ENCODE measurements at regions of chr21 and their contacts with region 1.

Region 1: DNA sequence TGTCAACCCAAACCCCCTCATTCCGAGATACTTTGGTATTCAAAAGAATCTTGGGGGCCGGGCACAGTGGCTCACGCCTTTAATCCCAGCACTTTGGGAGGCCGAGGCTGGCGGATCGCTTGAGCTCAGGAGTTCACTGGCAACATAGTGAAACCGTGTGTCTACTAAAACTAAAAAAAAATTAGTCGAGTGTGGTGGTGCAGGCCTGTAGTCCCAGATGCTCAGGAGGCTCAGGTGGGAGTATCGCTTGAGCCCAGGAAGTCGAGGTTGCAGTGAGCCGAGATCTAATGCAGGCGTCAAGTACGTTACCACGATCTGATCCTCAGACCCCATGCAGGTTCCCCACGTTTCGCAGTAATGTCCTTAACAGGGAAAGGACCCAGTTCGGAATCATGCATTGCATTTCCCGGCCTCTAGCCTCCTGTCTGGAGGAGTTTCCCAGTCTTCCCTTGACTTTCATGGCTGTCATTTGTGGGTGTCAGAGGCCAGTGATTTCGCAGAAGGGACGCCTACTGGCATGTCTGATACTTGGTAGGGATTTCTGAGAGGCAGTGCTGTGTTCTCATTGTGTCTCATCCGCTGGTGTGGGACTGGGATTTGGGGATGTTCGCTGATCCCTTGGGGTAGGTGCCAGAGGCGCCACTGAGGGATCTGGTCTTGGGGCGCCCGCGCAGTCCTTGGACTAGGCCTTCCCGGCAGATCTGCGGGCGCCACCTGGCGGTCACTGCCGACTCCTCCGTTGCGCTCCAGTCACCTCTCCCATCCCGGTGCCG is 39.3 kb upstream of the HMGN1 start:
- DNase-seq: peak; percentile 84
- H3K4me3 ChIP-seq: peak overlapping the region; percentile 68
- H3K27ac ChIP-seq: peak overlapping the region; percentile 64
- H3K4me1 ChIP-seq: peaks cover 22% of the 10 kb centered on the region
- CTCF ChIP-seq: peak; percentile 94

Region 2: GRCh38 chr21:39183237-39184007 is 204.8 kb before region 1 on chr21 and contains the start of gene PSMG1:
- CTCF ChIA-PET with region 1: no interaction called
- POLR2A ChIA-PET with region 1: interaction called, 3 read pairs
- intact Hi-C with region 1: loop called (anchors 2 kb)
- DNase-seq: peak; percentile 95
- H3K4me3 ChIP-seq: peak within 1 kb of the TSS; percentile 96
- H3K27ac ChIP-seq: peak within 1 kb of the TSS; percentile 62
- H3K4me1 ChIP-seq: peaks cover 35% of the 10 kb centered on the region
- CTCF ChIP-seq: no peak
- total RNA-seq, gene PSMG1: 76.9 and 87.2 TPM in 2 replicates

Region 3: DNA sequence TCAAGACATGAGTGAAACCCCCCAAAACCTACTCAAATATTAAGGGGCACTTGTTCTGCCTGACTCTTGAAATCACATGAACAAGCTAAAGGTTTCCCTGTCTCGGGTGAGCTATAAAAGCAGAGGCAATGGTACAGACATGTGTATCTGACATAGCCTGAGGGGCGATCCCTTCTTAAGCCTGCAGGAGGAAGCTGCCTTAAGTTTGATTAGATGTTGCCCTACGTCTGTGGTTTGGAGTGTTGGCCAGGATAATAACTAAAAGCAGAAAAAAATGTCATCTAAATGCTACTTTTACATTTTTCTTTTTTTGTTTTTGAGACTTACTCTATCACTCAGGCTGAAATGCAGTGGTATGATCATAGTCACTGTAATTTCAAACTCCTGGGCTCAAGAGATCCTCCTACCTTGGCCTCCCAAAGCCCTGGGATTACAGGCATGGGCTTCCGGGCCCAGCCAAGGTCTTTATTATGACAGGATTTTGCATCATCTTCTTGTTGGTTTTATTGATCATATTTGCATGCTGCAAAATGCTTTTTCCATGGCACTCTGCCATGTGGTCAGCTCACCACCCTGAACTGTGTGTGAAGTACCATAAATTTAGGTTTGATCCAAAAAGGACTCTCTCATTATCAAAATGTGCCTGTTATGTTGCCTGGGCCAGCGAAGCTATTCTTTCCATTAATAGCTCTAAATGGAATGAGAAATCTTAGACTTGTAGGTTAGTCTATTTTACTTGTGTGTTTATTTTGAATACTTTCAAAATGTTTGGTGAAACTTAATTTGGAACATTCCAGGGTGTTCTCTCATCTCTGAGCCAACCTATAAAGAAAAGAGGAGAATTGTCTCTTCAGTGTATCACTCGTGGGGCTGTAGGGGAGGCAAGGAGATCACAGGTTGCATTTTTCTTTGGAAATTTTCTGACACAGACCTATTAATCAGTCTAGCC is 24.3 kb before region 1 on chr21:
- CTCF ChIA-PET with region 1: no interaction called
- POLR2A ChIA-PET with region 1: no interaction called
- intact Hi-C with region 1: no loop called
- DNase-seq: no peak
- H3K4me3 ChIP-seq: no peak overlapping the region
- H3K27ac ChIP-seq: no peak overlapping the region
- H3K4me1 ChIP-seq: no peaks in the 10 kb centered on the region
- CTCF ChIP-seq: no peak

Region 4: DNA sequence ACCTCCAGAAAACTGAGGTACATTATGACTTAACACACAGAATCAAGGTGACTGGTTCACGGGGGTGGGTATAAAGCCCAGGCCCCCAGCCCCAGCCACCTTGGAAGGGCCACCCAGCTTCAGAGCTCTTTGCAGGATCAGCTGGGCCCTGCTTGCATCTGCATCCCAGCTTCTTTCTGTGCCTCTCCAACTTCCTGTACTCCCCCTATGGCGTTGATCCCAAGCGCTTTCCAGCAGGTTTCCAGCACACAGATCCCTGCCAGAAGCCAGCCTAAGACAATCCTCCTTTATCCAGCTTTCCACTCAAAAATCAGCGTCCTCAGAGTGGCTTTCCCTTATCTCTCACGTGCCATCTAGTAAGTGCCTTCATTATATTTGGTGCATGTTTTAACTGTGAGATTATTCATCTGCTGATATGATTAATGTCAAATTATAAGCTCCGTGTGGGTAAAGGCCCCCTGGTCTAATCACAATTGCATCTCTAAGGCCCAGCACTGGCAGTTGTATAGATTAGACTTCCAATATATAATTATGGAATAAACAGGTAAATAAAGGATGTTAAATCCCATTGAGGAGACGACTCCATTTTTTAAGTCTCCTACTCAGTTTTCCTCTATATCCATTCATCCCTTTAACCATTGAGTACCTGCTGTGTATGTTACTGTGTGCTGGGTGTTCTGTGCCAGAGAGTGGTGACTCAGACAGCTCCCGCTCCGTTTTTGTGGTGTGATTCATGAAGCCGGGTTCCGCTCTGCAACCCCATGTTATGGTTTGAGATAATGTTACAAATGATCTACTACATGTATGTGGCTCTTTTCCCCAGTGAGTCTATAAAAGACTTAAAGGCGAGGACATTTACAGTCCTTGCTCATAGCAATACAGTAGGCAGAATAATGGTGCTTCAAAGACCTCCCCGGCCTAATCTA is 866.6 kb after region 1 on chr21:
- CTCF ChIA-PET with region 1: no interaction called
- POLR2A ChIA-PET with region 1: no interaction called
- intact Hi-C with region 1: no loop called
- DNase-seq: no peak
- H3K4me3 ChIP-seq: no peak overlapping the region
- H3K27ac ChIP-seq: no peak overlapping the region
- H3K4me1 ChIP-seq: no peaks in the 10 kb centered on the region
- CTCF ChIP-seq: no peak

Region 5: DNA sequence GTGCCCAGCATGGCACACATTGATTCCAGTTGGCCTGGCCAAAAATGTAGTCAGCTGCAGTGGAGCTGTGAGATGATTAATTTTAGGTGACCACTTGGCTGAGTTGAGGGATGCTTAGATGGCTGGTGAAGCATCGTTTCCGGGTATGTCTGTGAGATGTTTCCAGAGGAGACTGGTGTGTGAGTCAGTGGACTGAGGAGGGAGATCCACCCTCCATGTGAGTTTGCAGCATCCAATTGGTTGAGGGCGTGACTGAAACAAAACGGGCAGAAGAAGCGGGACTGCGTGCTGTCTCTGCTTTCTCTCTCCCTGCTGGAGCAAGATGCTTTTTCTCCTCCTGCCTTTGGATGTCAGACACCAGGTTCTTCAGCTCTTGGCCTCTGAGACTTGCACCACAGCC is 1526.9 kb after region 1 on chr21:
- CTCF ChIA-PET with region 1: interaction called, 13 read pairs
- POLR2A ChIA-PET with region 1: no interaction called
- intact Hi-C with region 1: no loop called
- DNase-seq: no peak
- H3K4me3 ChIP-seq: no peak overlapping the region
- H3K27ac ChIP-seq: no peak overlapping the region
- H3K4me1 ChIP-seq: no peaks in the 10 kb centered on the region
- CTCF ChIP-seq: no peak